HEK293 (cell line): ENCODE measurements at regions of chr14 and their contacts with region 1.

Region 1: DNA sequence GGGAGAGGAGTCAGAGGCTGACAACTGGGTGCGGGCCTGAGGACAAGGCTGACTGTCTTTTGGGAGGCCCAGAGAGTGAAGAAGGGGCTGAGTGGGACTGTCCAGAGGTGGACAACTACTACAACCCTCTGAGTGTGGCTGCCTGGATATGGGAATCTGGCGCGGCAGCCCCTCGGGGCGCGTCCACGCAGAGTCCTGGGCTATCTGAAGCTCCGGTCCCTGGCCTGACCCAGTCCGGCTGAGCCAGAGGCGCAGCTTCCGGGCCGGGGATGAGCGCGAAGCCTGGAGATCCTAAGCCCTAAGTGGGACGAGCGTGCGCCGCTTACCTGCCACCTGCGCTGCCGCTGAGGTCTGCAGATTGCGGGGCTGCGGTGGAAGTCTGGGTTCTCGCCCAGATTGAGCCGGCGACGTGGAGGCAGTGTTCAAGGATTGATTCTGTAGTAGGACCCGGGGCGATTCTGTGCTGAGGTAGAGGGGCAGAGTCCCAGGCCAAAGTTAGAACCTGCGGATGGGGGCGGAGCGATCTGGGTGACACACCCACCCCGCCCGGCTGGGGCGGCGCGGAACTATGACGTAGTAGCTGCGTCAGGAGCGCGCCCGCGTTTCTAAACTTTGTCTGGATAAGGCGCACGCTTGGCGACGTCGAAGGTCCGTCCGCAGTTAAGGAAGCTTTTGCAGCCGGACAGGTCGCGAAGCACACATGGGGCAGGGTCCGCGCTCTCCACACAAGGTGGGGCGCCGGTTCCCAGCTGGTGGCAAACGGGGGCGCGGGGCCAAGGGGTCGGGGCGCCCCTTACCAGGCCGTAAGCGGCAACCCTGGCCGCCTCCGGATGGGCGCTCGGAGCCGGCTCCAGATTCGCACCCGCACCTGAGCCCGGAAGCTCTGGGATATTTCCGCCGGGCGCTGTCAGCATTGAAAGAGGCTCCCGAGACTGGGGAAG is at the starts of genes DHRS1 and NOP9:
- H3K4me3 ChIP-seq: peak within 1 kb of the TSS; percentile 85
- H3K27ac ChIP-seq: peak within 1 kb of the TSS; percentile 71
- H3K4me1 ChIP-seq: peaks cover 12% of the 10 kb centered on the region
- CTCF ChIP-seq: no peak

Region 2: GRCh38 chr14:24251880-24252288 is 47.6 kb before region 1 on chr14:
- CTCF ChIA-PET with region 1: interaction called, 133 read pairs
- POLR2A ChIA-PET with region 1: interaction called, 3 read pairs
- H3K4me3 ChIP-seq: no peak overlapping the region
- H3K27ac ChIP-seq: no peak overlapping the region
- H3K4me1 ChIP-seq: no peaks in the 10 kb centered on the region
- CTCF ChIP-seq: no peak

Region 3: DNA sequence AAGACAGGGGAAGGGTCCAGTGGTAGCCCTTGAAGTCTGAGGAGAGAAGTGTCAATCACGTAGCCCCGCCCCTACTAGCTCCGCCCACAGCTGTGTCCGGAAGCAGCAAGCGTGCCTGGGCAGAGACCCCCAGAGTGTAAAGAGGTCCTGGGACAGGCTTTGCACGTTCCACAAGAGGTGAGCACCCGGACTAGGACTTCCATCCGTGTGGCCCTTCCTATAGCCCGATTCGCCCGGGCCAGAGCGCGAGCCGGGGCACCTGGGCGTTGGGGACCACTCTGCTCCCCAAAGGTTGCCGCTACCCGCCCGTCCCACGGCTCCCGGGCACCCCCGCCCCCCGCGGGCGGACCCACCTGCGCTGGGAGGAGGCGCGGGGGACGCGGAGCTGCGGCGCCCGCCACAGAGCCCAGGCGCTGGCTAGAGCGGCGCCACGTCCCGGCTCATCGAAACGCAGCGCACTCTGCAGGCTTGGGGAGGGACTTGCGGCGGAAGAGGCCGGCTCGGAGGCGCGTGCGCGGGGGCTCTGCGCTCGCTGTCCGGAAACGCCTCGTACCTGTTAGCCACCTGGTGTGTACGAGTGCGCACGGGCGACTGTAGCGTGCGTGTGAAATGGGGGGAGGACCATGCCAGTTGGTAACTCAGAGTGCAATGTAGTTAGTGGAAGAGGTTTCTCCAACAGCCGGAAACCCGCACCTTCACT is 28.2 kb before region 1 on chr14 and contains the start of gene RABGGTA:
- CTCF ChIA-PET with region 1: interaction called, 11 read pairs
- POLR2A ChIA-PET with region 1: interaction called, 18 read pairs
- H3K4me3 ChIP-seq: peak within 1 kb of the TSS; percentile 92
- H3K27ac ChIP-seq: peak within 1 kb of the TSS; percentile 94
- H3K4me1 ChIP-seq: peaks cover 3% of the 10 kb centered on the region; the same call in 1 of the 2 replicates
- CTCF ChIP-seq: peak; percentile 96

Region 4: DNA sequence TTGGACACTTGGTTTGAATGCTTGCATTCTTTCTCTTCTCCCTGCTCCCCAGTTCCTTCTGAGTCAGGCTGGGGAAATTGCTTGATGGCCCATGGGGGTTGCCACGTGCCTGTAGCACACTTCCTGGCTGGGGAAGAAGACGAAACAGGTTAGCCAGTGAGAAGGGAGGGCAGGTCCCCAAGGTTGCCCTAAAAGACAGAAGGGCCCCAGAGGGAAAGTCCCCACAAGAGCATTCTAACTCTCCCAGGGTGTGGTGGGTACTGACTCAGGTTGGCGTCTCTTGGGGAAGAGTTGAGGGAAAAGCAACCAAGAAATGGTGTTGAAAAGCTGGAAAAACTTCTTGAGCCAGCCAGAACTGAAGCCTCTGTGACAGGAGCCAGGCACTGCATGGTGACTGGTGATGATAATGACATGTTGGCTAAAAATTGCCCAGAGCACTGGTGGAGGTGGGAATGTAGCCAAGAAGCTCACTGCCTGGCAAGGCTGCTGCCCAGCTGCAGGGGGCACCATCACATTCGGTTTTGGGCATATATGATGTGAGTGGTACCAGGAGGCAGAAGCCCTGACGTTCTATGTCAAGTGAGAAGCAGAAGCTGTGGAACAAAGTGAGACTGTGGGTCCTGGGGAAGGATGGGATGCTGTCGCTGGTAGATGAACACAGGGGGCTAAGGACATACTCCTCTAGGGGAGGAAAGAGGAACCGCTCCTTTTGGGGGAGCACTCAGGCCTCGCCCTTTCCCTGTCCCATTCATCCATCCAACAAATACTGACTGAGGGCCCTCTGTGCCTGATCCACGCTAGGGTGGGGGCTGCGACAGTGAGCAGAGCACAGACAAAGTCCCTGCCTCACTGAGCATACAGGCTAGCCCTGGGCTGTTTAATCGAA is 20.0 kb before region 1 on chr14:
- CTCF ChIA-PET with region 1: interaction called, 12 read pairs
- POLR2A ChIA-PET with region 1: no interaction called
- H3K4me3 ChIP-seq: no peak overlapping the region
- H3K27ac ChIP-seq: no peak overlapping the region
- H3K4me1 ChIP-seq: no peaks in the 10 kb centered on the region
- CTCF ChIP-seq: peak; percentile 70; the same call in 1 of the 2 replicates

Region 5: GRCh38 chr14:24310646-24311604 is 11.4 kb after region 1 on chr14 and contains the start of gene LTB4R:
- CTCF ChIA-PET with region 1: interaction called, 54 read pairs
- POLR2A ChIA-PET with region 1: interaction called, 10 read pairs
- H3K4me3 ChIP-seq: no peak within 1 kb of the TSS
- H3K27ac ChIP-seq: no peak within 1 kb of the TSS
- H3K4me1 ChIP-seq: no peaks in the 10 kb centered on the region
- CTCF ChIP-seq: no peak